ENCODE measurements at regions of chr9 and their contacts with region 1.

Region 1: DNA sequence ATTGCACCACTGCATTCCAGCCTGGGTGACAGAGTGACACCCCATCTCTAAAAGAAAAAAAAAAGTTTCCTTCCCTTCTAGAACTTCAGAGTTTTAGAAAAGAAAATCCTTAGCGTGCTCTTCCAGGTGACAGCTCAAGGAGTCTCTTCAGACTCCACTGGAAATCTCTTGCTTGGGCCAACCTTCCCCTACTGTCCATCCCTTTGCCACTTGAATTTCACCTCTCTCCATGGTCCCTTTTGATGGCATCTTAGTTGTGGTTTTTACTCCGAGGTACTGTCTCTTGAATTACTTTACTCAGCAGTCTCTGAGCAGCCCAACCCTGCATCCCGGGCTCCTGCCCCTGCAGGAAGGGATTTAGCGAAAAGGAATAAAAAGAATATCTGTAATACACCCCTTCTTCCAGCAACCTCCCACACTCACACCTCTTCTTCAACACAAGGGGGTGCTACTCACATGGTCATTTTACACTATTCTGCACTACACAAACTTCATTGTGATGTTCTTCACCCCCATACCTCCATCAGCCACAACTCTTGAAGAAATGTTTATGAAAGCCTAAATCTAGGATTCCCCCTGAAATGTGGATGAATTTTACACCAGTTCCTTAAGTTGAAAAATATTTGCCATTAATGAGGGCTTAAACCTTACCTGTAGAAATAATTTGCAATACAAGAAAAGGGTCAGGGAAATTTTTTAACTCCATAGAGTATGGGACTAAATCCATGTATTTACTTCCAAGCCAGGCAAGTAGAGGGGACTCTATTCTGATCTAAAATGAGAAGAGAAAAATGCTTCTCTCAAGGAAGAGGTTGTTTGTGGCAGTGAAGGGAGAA is 25.9 kb downstream of the TPD52L3 start:
- DNase-seq: peak; percentile 52
- H3K4me3 ChIP-seq: no peak overlapping the region
- H3K27ac ChIP-seq: no peak overlapping the region
- H3K4me1 ChIP-seq: peaks cover 26% of the 10 kb centered on the region
- H3K27me3 ChIP-seq: no peaks in the 10 kb centered on the region
- CTCF ChIP-seq: peak; percentile 75

Region 2: GRCh38 chr9:6230037-6230760 is 123.9 kb before region 1 on chr9:
- CTCF ChIA-PET with region 1: no interaction called
- dilution Hi-C with region 1: no loop called
- in situ Hi-C with region 1: no loop called
- intact Hi-C with region 1: no loop called
- DNase-seq: peak; percentile 85
- H3K4me3 ChIP-seq: no peak overlapping the region
- H3K27ac ChIP-seq: no peak overlapping the region
- H3K4me1 ChIP-seq: peaks cover 29% of the 10 kb centered on the region
- H3K27me3 ChIP-seq: peaks cover under 1% of the 10 kb centered on the region
- CTCF ChIP-seq: no peak

Region 3: GRCh38 chr9:6412487-6413364 is 58.7 kb after region 1 on chr9 and contains the start of gene UHRF2:
- CTCF ChIA-PET with region 1: interaction called, 3 read pairs
- dilution Hi-C with region 1: no loop called
- in situ Hi-C with region 1: no loop called
- intact Hi-C with region 1: loop called (anchors 1 kb)
- DNase-seq: peak; percentile 98
- H3K4me3 ChIP-seq: peak within 1 kb of the TSS; percentile 82 to 95 (median 84)
- H3K27ac ChIP-seq: peak within 1 kb of the TSS; percentile 75
- H3K4me1 ChIP-seq: peaks cover 19% of the 10 kb centered on the region
- H3K27me3 ChIP-seq: no peaks in the 10 kb centered on the region
- CTCF ChIP-seq: peak in 1 of 2 donors; percentile 4
- total RNA-seq, gene UHRF2: 45.5 to 72.0 TPM

Region 4: GRCh38 chr9:6525326-6526045 is 171.4 kb after region 1 on chr9:
- CTCF ChIA-PET with region 1: no interaction called
- dilution Hi-C with region 1: loop called (anchors 10 kb)
- in situ Hi-C with region 1: no loop called
- intact Hi-C with region 1: no loop called
- DNase-seq: no peak
- H3K4me3 ChIP-seq: no peak overlapping the region
- H3K27ac ChIP-seq: no peak overlapping the region
- H3K4me1 ChIP-seq: no peaks in the 10 kb centered on the region
- H3K27me3 ChIP-seq: no peaks in the 10 kb centered on the region
- CTCF ChIP-seq: no peak

Region 5: DNA sequence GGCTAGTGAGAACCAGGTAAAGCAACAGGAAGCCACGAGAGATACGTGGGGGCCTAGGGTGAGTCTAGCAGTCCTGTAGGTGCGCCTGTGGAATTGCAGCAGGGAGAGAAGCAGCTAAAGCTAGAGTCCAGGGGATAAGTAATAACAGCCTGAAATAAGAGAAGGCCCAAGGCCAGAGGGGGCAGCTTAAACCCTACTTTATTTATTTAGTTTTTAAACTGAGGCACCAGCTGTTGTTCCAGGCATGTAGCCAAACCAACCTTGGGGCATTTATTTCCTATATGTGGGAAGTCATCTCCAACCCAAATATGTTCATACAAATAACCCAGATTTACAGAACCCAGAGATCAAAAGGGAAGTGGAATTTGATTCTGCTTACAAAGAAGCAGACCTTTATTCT is 198.0 kb after region 1 on chr9:
- CTCF ChIA-PET with region 1: no interaction called
- dilution Hi-C with region 1: no loop called
- in situ Hi-C with region 1: no loop called
- intact Hi-C with region 1: no loop called
- DNase-seq: no peak
- H3K4me3 ChIP-seq: no peak overlapping the region
- H3K27ac ChIP-seq: no peak overlapping the region
- H3K4me1 ChIP-seq: peaks cover 17% of the 10 kb centered on the region
- H3K27me3 ChIP-seq: no peaks in the 10 kb centered on the region
- CTCF ChIP-seq: peak in 1 of 2 donors; percentile 8

Region 6: DNA sequence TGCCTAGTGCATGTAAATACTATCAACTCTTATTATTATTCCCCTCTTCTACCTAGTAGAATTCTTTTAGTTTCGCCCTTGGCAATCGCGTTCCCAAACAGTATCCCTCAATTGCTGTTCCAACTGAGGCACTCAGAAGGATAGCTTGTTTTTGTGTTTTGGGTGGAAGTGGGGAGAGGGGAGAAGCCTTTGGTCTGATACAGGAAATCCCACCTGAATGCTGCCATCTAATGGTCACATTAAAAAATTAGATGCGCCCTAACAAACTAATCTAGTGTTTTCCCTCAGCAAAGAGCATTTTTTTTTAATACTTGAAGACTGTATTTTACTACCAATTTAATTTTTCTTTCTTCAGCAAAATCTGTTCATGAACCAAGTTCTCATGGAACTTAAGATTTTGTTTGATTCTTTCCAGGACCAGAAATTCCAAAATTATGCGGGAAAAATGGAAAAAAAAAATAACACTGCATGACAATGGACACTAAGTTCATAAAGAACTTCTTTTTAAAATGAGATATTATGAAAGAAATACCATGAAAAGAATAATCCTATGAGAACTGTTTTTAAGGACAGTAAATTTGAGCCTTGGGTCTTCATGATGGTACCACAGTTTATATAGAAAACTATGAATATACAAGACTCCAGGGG is 313.7 kb after region 1 on chr9:
- CTCF ChIA-PET with region 1: no interaction called
- dilution Hi-C with region 1: no loop called
- in situ Hi-C with region 1: no loop called
- intact Hi-C with region 1: loop called (anchors 1 kb)
- DNase-seq: no peak
- H3K4me3 ChIP-seq: no peak overlapping the region
- H3K27ac ChIP-seq: no peak overlapping the region
- H3K4me1 ChIP-seq: no peaks in the 10 kb centered on the region
- H3K27me3 ChIP-seq: no peaks in the 10 kb centered on the region
- CTCF ChIP-seq: peak; percentile 49 to 61

Region 7: GRCh38 chr9:6686396-6686795 is 332.3 kb after region 1 on chr9:
- CTCF ChIA-PET with region 1: no interaction called
- dilution Hi-C with region 1: no loop called
- in situ Hi-C with region 1: loop called in 1 of 2 experiments (anchors 25 kb)
- intact Hi-C with region 1: loop called (anchors 1 kb)
- DNase-seq: peak; percentile 26
- H3K4me3 ChIP-seq: no peak overlapping the region
- H3K27ac ChIP-seq: no peak overlapping the region
- H3K4me1 ChIP-seq: peaks cover 4% of the 10 kb centered on the region
- H3K27me3 ChIP-seq: no peaks in the 10 kb centered on the region
- CTCF ChIP-seq: peak; percentile 26 to 43

Measured in mammary epithelial cell (primary cell).